OCI-LY7 (cell line): ENCODE measurements at regions of chr15 and their contacts with region 1.

Region 1: GRCh38 chr15:47987908-47988532 is 132.8 kb upstream of the SLC24A5 start:
- DNase-seq: peak; percentile 69
- H3K4me3 ChIP-seq: no peak overlapping the region
- H3K27ac ChIP-seq: no peak overlapping the region
- H3K4me1 ChIP-seq: no peaks in the 10 kb centered on the region
- CTCF ChIP-seq: peak; percentile 82

Region 2: DNA sequence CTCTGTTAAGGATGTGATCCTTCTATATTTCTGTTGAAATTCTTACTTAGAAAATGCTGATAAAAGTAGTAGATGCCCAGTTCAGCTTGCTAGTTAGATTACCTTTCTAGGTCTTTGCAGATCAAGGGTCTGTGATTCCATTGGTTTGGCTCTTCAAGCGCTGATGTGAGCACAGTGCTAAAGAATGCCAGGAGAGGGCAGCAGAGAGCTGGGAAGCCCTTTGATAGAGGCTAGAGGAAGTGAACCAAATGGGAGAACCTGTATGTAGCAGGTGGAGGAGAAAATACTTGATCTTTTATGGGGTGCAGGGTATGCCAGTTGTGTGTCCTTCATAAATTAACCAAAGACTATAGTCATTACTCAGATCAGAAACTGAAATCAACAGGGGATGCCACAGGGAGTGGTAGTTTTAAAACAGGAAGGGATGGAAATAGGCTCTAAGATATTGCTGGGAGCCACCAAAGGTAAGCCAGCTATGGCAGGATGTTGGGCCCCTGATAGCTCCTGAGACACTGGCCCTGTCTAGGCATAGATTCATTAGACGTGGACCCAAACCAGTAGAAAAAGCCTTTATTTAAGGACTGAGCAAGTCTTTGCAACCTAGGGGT is 1675.8 kb before region 1 on chr15:
- CTCF ChIA-PET with region 1: no interaction called
- POLR2A ChIA-PET with region 1: no interaction called
- intact Hi-C with region 1: loop called (anchors 10 kb)
- DNase-seq: peak; percentile 69
- H3K4me3 ChIP-seq: no peak overlapping the region
- H3K27ac ChIP-seq: no peak overlapping the region
- H3K4me1 ChIP-seq: no peaks in the 10 kb centered on the region
- CTCF ChIP-seq: peak; percentile 90

Region 3: DNA sequence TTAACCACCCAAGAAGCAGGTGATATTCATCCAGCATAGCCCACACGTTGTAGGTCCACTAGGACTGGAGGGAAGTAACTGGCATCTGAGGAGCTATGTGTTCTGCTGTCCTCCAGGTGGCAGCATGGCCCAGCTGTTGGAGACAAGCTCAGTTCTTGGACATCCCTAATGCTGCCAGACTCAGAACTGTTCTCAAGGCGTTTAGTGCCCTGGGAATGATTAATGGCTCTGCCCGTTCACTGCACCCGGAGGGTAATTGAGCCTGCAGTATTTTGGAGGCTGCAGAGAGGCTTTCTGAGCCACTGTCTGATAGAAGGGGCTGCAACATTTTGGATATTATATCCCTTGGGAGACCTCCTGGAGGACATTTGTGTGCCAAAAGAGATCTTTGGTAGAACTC is 792.0 kb before region 1 on chr15:
- CTCF ChIA-PET with region 1: no interaction called
- POLR2A ChIA-PET with region 1: interaction called, 3 read pairs
- intact Hi-C with region 1: loop called (anchors 1 kb)
- DNase-seq: peak; percentile 63
- H3K4me3 ChIP-seq: no peak overlapping the region
- H3K27ac ChIP-seq: no peak overlapping the region
- H3K4me1 ChIP-seq: no peaks in the 10 kb centered on the region
- CTCF ChIP-seq: peak; percentile 77

Region 4: DNA sequence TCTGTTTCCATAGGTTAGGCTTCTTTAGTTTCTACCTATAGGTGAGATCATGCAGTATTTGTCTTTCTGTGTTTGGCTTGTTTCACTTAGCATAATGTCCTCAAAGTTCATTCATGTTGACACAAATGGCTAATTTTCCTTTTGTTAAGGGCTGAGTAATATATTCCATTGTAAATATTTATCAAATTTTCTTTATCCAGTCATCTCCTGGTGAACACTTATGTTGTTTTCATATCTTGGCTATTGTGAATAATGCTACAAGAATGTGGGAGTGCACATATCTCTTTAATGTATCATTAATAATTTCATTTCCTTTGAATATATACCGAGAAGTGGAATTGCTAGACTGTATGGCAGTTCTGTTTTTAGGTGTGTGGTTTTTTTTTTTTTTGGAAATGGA is 521.7 kb before region 1 on chr15:
- CTCF ChIA-PET with region 1: no interaction called
- POLR2A ChIA-PET with region 1: no interaction called
- intact Hi-C with region 1: loop called (anchors 5 kb)
- DNase-seq: no peak
- H3K4me3 ChIP-seq: no peak overlapping the region
- H3K27ac ChIP-seq: no peak overlapping the region
- H3K4me1 ChIP-seq: no peaks in the 10 kb centered on the region
- CTCF ChIP-seq: no peak

Region 5: DNA sequence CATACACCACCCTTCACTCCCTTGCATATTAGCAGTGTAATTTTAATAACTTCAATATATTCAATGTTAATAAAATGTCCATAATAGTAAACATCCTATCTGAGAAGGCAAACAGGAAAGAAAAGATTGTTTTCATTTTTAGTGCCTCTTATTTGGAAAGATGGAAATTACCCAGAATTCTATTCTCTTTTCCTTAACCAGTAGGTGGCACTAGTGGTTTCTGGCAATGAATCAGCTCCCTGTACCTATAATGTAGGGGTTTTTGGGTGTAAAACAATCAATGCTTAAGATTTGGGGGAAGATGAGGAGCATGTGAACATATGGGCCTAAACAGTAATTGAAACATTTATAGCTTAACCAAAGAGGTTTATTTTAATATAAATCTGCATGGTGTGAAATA is 276.4 kb before region 1 on chr15:
- CTCF ChIA-PET with region 1: no interaction called
- POLR2A ChIA-PET with region 1: no interaction called
- intact Hi-C with region 1: loop called (anchors 2 kb)
- DNase-seq: peak; percentile 23
- H3K4me3 ChIP-seq: no peak overlapping the region
- H3K27ac ChIP-seq: no peak overlapping the region
- H3K4me1 ChIP-seq: no peaks in the 10 kb centered on the region
- CTCF ChIP-seq: peak; percentile 81

Region 6: GRCh38 chr15:47885921-47886320 is 102.1 kb before region 1 on chr15:
- CTCF ChIA-PET with region 1: no interaction called
- POLR2A ChIA-PET with region 1: no interaction called
- intact Hi-C with region 1: no loop called
- DNase-seq: no peak
- H3K4me3 ChIP-seq: no peak overlapping the region
- H3K27ac ChIP-seq: no peak overlapping the region
- H3K4me1 ChIP-seq: no peaks in the 10 kb centered on the region
- CTCF ChIP-seq: no peak

Region 7: GRCh38 chr15:48244921-48245320 is 256.9 kb after region 1 on chr15:
- CTCF ChIA-PET with region 1: no interaction called
- POLR2A ChIA-PET with region 1: no interaction called
- intact Hi-C with region 1: no loop called
- DNase-seq: no peak
- H3K4me3 ChIP-seq: no peak overlapping the region
- H3K27ac ChIP-seq: no peak overlapping the region
- H3K4me1 ChIP-seq: no peaks in the 10 kb centered on the region
- CTCF ChIP-seq: no peak